A673 (cell line): ENCODE measurements at regions of chr10 and their contacts with region 1.

Region 1: GRCh38 chr10:67815571-67816059 is 22.4 kb downstream of the DNAJC12 start:
- DNase-seq: peak; percentile 87
- H3K4me3 ChIP-seq: no peak overlapping the region
- H3K27ac ChIP-seq: peak overlapping the region; percentile 90
- H3K4me1 ChIP-seq: peaks cover 45% of the 10 kb centered on the region
- H3K27me3 ChIP-seq: no peaks in the 10 kb centered on the region
- CTCF ChIP-seq: no peak

Region 2: GRCh38 chr10:67331121-67331910 is 484.3 kb before region 1 on chr10:
- CTCF ChIA-PET with region 1: no interaction called
- POLR2A ChIA-PET with region 1: no interaction called
- intact Hi-C with region 1: no loop called
- DNase-seq: no peak
- H3K4me3 ChIP-seq: no peak overlapping the region
- H3K27ac ChIP-seq: no peak overlapping the region
- H3K4me1 ChIP-seq: no peaks in the 10 kb centered on the region
- H3K27me3 ChIP-seq: peaks cover 3% of the 10 kb centered on the region
- CTCF ChIP-seq: no peak

Region 3: DNA sequence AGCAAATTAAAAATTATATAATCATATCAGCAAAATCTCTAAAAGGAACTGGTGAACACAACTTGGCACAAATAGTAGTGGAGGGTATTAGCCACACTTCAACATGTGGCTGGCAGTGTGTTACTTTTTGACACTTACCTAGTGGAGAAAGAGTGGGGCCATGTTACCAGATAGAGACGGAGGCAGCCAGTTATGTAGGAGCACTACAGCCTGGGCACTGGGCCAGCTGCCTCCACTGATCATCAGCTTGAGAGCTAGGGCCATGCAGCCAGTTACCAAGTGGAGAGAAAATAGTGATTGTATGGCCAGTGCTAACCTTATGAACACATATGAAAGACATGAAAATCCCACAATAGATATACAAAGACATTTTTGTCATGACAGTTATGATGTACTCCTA is 362.7 kb before region 1 on chr10:
- CTCF ChIA-PET with region 1: no interaction called
- POLR2A ChIA-PET with region 1: no interaction called
- intact Hi-C with region 1: no loop called
- DNase-seq: no peak
- H3K4me3 ChIP-seq: no peak overlapping the region
- H3K27ac ChIP-seq: no peak overlapping the region
- H3K4me1 ChIP-seq: no peaks in the 10 kb centered on the region
- H3K27me3 ChIP-seq: peaks cover 5% of the 10 kb centered on the region
- CTCF ChIP-seq: no peak

Region 4: GRCh38 chr10:67803588-67804394 is 11.8 kb before region 1 on chr10:
- CTCF ChIA-PET with region 1: no interaction called
- POLR2A ChIA-PET with region 1: interaction called, 10 read pairs
- intact Hi-C with region 1: no loop called
- DNase-seq: no peak
- H3K4me3 ChIP-seq: no peak overlapping the region
- H3K27ac ChIP-seq: peak overlapping the region; percentile 63
- H3K4me1 ChIP-seq: peaks cover 27% of the 10 kb centered on the region
- H3K27me3 ChIP-seq: no peaks in the 10 kb centered on the region
- CTCF ChIP-seq: no peak